WTC11 (cell line): ENCODE measurements at regions of chr6 and their contacts with region 1.

Region 1: DNA sequence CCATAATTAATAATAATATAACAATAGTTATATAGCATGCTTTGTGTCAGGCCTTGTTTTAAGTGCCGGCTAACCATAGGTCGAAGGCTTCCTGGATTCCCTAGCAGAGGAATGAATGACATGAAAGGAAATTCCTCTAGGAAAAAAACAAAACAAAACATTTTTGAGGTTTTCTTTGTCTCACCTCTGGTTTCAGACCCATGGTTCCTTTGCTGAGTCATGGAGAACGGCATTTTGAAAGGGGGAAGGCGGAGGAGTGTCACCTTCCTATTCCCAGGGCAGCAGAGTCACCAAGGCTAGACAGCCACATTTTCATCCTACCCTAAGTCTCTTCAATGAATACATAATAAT is 25.3 kb upstream of the CCND3 start:
- DNase-seq: peak; percentile 17
- ATAC-seq: no peak
- H3K4me3 Mint-ChIP-seq: no peak overlapping the region
- H3K27ac Mint-ChIP-seq: peak overlapping the region; percentile 80
- H3K4me1 Mint-ChIP-seq: peaks cover 49% of the 10 kb centered on the region
- H3K27me3 Mint-ChIP-seq: no peaks in the 10 kb centered on the region
- CTCF ChIP-seq: no peak

Region 2: GRCh38 chr6:41936073-41936837 is 30.7 kb before region 1 on chr6:
- CTCF ChIA-PET with region 1: interaction called, 38 read pairs
- POLR2A ChIA-PET with region 1: interaction called, 9 read pairs
- DNase-seq: peak; percentile 61
- ATAC-seq: peak; percentile 49
- H3K4me3 Mint-ChIP-seq: no peak overlapping the region
- H3K27ac Mint-ChIP-seq: 0 out of 2 replicates have a peak overlapping the region, but pooled peaks have one; percentile 78
- H3K4me1 Mint-ChIP-seq: peaks cover 26% of the 10 kb centered on the region
- H3K27me3 Mint-ChIP-seq: no peaks in the 10 kb centered on the region
- CTCF ChIP-seq: peak; percentile 77

Region 3: DNA sequence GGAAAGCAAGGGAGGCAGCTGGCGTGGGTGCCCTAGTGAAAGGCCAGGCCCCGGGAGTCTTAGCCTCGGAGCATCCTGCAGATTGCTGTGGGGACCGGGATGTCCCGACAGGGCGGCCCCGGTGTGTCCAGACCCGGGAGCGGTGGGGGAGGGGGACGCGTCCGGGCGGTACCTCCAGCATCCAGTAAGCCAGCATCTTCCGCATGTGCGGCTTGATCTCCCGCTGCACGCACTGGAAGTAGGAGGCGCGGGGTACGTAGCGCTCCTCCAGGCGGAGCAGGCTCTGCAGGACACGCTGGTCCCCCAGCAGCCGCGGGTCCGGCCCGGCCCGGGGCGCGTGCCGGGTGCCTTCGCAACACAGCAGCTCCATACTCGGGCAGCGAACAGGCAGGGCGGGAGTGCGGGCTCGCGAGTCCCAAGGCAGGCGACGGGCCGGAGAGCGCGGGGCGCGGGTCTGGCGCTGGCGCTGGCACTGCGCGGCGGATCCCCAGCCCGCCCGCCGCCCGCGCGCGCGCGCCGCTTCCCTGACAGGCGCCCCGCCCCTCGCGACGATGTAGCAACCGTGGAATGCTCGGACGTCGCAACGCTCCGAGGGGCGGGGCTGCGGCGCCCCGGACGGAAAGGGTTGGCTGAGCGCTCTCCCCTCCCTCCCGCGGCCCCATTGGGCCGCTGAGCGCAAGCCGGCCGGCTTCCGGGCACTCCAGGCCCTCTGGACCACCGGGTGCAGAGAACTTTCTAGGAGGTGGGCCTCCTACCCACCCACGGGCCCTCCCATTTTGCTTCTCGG is 25.5 kb before region 1 on chr6 and contains the start of gene CCND3:
- CTCF ChIA-PET with region 1: interaction called, 38 read pairs
- POLR2A ChIA-PET with region 1: interaction called, 9 read pairs
- DNase-seq: peak; percentile 81
- ATAC-seq: peak; percentile 62
- H3K4me3 Mint-ChIP-seq: peak within 1 kb of the TSS; percentile 92
- H3K27ac Mint-ChIP-seq: peak within 1 kb of the TSS; percentile 46
- H3K4me1 Mint-ChIP-seq: peaks cover 32% of the 10 kb centered on the region
- H3K27me3 Mint-ChIP-seq: no peaks in the 10 kb centered on the region
- CTCF ChIP-seq: no peak
- total RNA-seq, gene CCND3: 23.0 to 33.6 TPM (median 23.0 TPM) in 3 replicates

Region 4: DNA sequence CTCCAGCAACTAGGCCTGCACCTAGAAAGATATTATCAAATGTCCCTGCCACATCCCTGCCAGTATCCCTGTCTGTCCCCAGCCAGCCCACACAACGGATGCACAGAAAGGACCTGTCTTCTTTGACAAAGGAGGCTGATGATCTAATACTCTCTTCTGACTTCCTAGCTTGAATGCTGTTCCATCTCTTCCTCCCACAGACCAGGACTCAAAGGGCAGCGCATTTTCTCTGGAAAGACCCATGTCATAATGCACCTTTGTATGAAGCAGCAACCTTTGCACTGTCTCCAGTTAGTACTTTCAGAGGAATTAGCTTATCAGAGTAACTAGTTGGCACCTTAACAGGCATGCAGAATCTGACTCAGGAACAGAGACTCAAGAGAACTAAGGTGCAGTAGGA is 30.1 kb after region 1 on chr6:
- CTCF ChIA-PET with region 1: no interaction called
- POLR2A ChIA-PET with region 1: no interaction called
- DNase-seq: no peak
- ATAC-seq: no peak
- H3K4me3 Mint-ChIP-seq: no peak overlapping the region
- H3K27ac Mint-ChIP-seq: no peak overlapping the region
- H3K4me1 Mint-ChIP-seq: no peaks in the 10 kb centered on the region
- H3K27me3 Mint-ChIP-seq: no peaks in the 10 kb centered on the region
- CTCF ChIP-seq: no peak